Activated CD4-positive, alpha-beta T cell treated with anti-CD3 and anti-CD28 coated beads for 36 hours (primary cell): ENCODE measurements at regions of chr3 and their contacts with region 1.

Region 1: DNA sequence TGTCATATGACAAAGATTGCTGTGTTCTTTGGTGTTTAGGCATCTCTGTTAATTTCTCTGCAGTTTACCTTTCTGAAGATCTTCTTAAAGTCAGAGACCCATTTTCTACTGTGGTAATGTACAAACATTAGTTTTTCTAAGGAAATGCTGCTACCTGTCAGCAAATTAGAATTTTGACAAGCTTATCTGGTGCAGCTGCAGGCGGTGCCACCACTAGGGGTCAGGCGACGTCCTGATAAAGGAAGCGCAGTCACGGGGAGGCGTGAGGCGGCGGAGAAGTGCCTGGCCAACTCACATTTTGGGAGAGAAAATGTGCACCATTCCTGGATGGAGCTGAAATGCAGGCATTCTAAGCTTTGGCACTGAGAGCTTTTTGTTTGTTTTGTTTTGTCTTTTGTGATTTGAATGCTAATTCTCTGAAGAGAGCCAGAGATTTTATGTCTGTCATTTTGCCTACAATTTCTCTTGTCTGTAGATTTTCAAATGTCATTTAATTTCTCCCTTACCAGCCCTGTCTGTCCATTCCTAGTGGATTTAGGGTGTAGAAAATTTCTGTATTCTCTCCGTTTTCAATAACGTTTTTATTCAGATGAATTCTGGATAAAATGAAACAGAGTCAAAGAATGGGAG is 24.9 kb upstream of the SIAH2 start:
- DNase-seq: peak; percentile 94
- ATAC-seq: peak; percentile 50
- H3K4me3 Mint-ChIP-seq: peak overlapping the region; percentile 23
- H3K27ac Mint-ChIP-seq: peak overlapping the region; percentile 55
- H3K4me1 Mint-ChIP-seq: peaks cover 47% of the 10 kb centered on the region
- H3K27me3 Mint-ChIP-seq: peaks cover 10% of the 10 kb centered on the region

Region 2: DNA sequence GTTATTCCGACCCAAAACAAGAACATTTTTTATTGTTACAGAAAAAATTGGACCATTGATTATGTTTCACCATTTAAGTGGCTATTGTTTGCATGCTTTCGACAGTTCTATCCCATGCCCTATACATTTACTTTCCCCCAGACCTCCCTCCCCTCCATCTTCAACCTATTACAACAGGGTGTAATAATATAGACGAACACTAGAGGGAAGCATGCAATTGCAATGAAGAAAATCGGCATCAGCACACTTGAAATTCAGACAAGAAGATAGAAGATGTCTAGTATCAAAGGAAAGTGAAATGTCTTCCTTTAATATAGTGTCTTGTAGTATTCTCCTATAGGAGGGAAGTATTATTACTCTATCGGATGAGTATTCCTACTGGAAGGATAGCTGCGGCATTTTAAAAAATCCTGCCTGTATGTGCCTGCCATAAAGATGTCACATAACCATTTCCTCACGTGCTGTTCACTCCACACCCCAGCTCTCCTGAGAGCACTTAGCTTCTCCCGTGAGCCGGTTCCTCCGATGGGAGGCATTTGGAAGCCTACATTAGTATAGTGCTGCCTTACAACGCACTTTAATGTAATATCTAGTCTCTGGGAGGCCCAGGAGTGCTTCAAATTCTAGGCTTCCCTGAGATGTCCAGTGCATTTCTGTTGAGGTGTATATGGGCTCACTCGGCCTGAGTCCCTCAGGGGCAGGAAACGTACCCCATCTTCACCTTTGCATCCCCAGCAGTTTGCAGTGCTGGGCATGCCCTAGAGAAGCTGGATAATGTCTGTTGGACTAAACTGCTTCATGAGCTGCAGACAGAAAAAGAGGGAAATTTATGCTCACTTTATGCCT is 66.3 kb before region 1 on chr3:
- CTCF ChIA-PET with region 1: interaction called, 30 read pairs
- POLR2A ChIA-PET with region 1: no interaction called
- intact Hi-C with region 1: loop called (anchors 1 kb)
- DNase-seq: no peak
- ATAC-seq: peak; percentile 64
- H3K4me3 Mint-ChIP-seq: no peak overlapping the region
- H3K27ac Mint-ChIP-seq: no peak overlapping the region
- H3K4me1 Mint-ChIP-seq: peaks cover 29% of the 10 kb centered on the region
- H3K27me3 Mint-ChIP-seq: no peaks in the 10 kb centered on the region

Region 3: GRCh38 chr3:150775091-150775501 is 12.8 kb before region 1 on chr3:
- CTCF ChIA-PET with region 1: interaction called, 18 read pairs
- POLR2A ChIA-PET with region 1: interaction called, 3 read pairs
- intact Hi-C with region 1: no loop called
- DNase-seq: no peak
- ATAC-seq: no peak
- H3K4me3 Mint-ChIP-seq: no peak overlapping the region
- H3K27ac Mint-ChIP-seq: no peak overlapping the region
- H3K4me1 Mint-ChIP-seq: no peaks in the 10 kb centered on the region
- H3K27me3 Mint-ChIP-seq: no peaks in the 10 kb centered on the region

Region 4: DNA sequence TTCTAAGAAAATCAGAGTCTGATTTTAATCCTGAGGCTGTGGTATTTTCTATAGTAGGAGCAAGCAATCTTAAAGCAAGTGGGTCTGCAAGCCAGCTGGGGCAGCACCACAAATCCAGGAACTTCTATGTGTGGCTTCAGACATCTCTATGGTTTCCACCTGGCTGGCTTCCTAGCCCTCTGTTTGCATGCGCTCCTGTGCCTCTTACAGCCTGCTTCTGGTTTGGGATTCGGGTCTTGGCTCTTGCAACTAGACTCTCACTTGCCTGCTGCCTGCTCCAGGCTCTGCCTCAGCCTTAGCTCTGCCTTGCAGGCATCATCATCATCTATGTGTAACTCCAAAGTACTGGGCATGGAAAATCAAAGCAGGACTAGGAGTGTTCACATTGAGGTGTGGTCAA is 74.0 kb after region 1 on chr3:
- CTCF ChIA-PET with region 1: interaction called, 28 read pairs
- POLR2A ChIA-PET with region 1: no interaction called
- intact Hi-C with region 1: loop called (anchors 1 to 2 kb)
- DNase-seq: no peak
- ATAC-seq: no peak
- H3K4me3 Mint-ChIP-seq: no peak overlapping the region
- H3K27ac Mint-ChIP-seq: no peak overlapping the region
- H3K4me1 Mint-ChIP-seq: peaks cover 6% of the 10 kb centered on the region
- H3K27me3 Mint-ChIP-seq: peaks cover 15% of the 10 kb centered on the region

Region 5: GRCh38 chr3:151086484-151087456 is 298.9 kb after region 1 on chr3:
- CTCF ChIA-PET with region 1: interaction called, 3 read pairs
- POLR2A ChIA-PET with region 1: no interaction called
- intact Hi-C with region 1: loop called in 1 of 2 experiments (anchors 5 kb)
- DNase-seq: peak; percentile 89
- ATAC-seq: peak; percentile 91
- H3K4me3 Mint-ChIP-seq: peak overlapping the region; percentile 77
- H3K27ac Mint-ChIP-seq: peak overlapping the region; percentile 13
- H3K4me1 Mint-ChIP-seq: peaks cover 10% of the 10 kb centered on the region
- H3K27me3 Mint-ChIP-seq: peaks cover 36% of the 10 kb centered on the region

Region 6: DNA sequence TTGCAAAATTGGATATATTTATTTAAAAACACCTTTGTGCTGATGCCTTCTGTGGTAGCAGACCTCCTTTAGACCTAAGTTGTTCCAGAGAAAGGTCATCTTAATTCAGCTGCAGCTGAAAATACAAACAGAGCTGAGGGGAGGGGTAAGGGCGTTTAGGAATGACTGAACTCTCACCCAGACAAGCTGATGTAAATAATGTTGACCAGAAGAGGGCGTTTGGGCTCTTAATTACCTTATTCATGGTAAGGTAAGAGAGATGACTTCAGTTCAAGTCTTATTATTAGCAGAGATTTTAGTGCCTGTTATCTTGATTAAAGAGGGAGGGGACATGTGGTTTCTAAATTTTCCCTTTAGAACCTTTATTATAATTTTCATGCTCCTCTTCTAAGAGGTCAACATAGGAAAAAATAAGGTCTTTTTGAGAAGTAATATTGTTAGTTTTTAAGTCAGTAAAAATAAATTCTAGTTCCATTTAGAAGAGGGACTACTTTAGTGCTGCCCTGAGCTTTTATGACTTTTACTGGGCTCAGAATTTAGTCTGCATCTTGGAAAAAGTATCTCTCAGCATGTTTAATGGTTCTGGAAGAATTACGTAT is 368.9 kb after region 1 on chr3:
- CTCF ChIA-PET with region 1: no interaction called
- POLR2A ChIA-PET with region 1: no interaction called
- intact Hi-C with region 1: no loop called
- DNase-seq: peak; percentile 46
- ATAC-seq: peak; percentile 92
- H3K4me3 Mint-ChIP-seq: no peak overlapping the region
- H3K27ac Mint-ChIP-seq: no peak overlapping the region
- H3K4me1 Mint-ChIP-seq: no peaks in the 10 kb centered on the region
- H3K27me3 Mint-ChIP-seq: peaks cover 4% of the 10 kb centered on the region

Region 7: DNA sequence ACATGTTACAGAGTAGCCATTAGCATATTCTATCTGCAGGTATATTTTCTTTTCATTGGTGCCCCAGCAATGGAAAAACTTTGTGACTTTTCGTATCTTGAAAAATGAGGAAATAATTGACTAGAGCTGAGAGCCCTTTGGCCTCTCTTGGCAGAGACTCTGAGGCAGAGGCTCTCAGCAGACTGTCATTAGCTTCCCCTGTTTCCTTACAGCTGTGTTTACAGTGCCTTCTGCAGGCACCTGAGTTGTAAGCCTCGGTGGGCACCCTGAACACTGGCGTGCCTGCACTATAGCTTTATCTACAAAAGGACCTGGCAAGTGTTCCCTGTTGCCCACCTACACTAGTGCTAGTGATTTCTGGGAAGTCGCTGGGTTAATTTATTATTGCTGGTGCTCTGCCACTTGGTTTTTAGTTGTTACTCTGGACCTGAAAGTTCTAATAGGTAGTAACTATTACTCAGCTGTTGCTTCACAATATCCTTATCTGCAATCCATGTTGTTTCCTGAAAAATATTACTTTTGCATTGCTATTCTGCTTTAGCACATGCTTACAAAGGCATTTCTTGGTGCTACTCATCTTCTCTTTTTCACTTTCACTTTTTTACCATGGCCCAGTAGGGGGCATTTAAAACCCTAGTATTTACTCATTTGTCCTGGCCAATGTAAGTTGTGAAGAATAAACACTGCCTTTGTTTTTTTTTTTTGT is 423.0 kb after region 1 on chr3:
- CTCF ChIA-PET with region 1: no interaction called
- POLR2A ChIA-PET with region 1: interaction called, 3 read pairs
- intact Hi-C with region 1: loop called in 1 of 2 experiments (anchors 5 kb)
- DNase-seq: peak; percentile 20
- ATAC-seq: peak; percentile 38
- H3K4me3 Mint-ChIP-seq: peak overlapping the region; percentile 41
- H3K27ac Mint-ChIP-seq: peak overlapping the region; percentile 89
- H3K4me1 Mint-ChIP-seq: peaks cover 58% of the 10 kb centered on the region
- H3K27me3 Mint-ChIP-seq: no peaks in the 10 kb centered on the region